Mucosa of descending colon (tissue), 3 donors: ENCODE measurements at regions of chr10 and their contacts with region 1.

Region 1: GRCh38 chr10:17910125-17910789 is 41.5 kb upstream of the SLC39A12 start:
- DNase-seq: peak in 1 of 3 donors; percentile 79
- ATAC-seq: peak; percentile 72
- H3K4me3 ChIP-seq: no peak overlapping the region
- H3K4me1 ChIP-seq: no peaks in the 10 kb centered on the region
- CTCF ChIP-seq: peak; percentile 19

Region 2: GRCh38 chr10:17792991-17793390 is 117.3 kb before region 1 on chr10:
- intact Hi-C with region 1: no loop called
- DNase-seq: no peak
- ATAC-seq: no peak
- H3K4me3 ChIP-seq: no peak overlapping the region
- H3K4me1 ChIP-seq: peaks cover 10% of the 10 kb centered on the region
- CTCF ChIP-seq: no peak

Region 3: GRCh38 chr10:18214691-18215563 is 304.7 kb after region 1 on chr10:
- intact Hi-C with region 1: loop called in 1 of 2 experiments (anchors 10 kb)
- DNase-seq: peak in 2 of 3 donors; percentile 36 to 82
- ATAC-seq: peak; percentile 87
- H3K4me3 ChIP-seq: no peak overlapping the region
- H3K4me1 ChIP-seq: no peaks in the 10 kb centered on the region
- CTCF ChIP-seq: peak; percentile 64

Region 4: GRCh38 chr10:18238870-18239485 is 328.7 kb after region 1 on chr10:
- intact Hi-C with region 1: loop called in 1 of 2 experiments (anchors 10 kb)
- DNase-seq: peak in 1 of 3 donors; percentile 30
- ATAC-seq: peak; percentile 26
- H3K4me3 ChIP-seq: no peak overlapping the region
- H3K4me1 ChIP-seq: no peaks in the 10 kb centered on the region
- CTCF ChIP-seq: peak; percentile 30